Activated CD8-positive, alpha-beta memory T cell treated with anti-CD3 and anti-CD28 coated beads, Interleukin-2, amount 10 ng/mL, durations not matched to agents 7 days and 5 days (primary cell): ENCODE measurements at regions of chr17 and their contacts with region 1.

Region 1: DNA sequence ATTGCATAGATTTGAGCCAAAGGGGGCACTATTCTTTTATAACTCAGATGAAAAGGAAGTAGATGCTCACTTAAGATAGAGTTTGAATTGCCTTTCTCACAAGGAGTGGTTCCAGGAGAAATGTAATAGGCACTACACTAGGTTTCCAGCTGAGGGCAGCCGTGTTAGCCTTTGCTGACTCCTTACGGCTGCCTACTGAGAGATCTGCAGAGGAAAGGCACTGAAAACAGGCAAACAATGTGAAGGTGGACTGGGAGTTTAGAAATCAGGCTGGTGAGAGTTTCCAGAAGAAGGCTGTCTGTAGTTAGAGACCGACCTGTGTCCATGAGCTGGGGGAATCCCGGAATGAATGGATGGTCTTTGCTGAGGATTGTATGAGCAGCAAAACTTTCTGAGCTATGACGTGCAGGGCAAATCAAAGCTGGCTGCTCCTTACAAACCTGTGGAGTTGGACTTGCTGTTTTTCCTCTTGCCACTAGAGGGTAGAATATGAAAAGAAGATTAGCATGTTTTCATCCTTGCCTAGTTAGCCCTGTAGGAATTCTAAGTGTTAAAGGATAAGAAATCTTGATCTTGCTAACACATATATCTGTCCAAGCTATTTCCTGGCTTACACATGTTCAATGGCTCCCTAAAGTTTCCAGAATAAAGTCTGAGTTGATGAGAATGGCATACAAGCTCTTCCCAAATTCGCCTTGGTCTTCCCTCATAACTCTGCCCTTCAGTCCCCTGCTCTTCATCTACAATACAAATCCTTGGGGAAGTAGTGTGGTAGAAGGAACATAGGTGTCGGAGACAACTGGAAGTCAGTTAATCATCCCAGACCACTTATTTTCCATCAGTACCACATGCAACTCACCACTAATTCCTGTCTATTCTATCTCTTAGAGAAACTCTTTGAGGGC is 20.1 kb upstream of the TAOK1 start:
- DNase-seq: peak; percentile 65
- ATAC-seq: peak; percentile 93
- H3K4me3 Mint-ChIP-seq: no peak overlapping the region
- H3K27ac Mint-ChIP-seq: no peak overlapping the region
- H3K4me1 Mint-ChIP-seq: no peaks in the 10 kb centered on the region
- H3K27me3 Mint-ChIP-seq: no peaks in the 10 kb centered on the region

Region 2: GRCh38 chr17:29293890-29294579 is 76.0 kb before region 1 on chr17 and contains the start of gene NUFIP2:
- CTCF ChIA-PET with region 1: no interaction called
- DNase-seq: peak; percentile 99
- ATAC-seq: peak; percentile 89
- H3K4me3 Mint-ChIP-seq: peak within 1 kb of the TSS; percentile 98
- H3K27ac Mint-ChIP-seq: peak within 1 kb of the TSS; percentile 98
- H3K4me1 Mint-ChIP-seq: peaks cover 35% of the 10 kb centered on the region
- H3K27me3 Mint-ChIP-seq: no peaks in the 10 kb centered on the region
- total RNA-seq, gene NUFIP2: 66.3 to 78.0 TPM

Region 3: GRCh38 chr17:29386760-29387159 is 16.7 kb after region 1 on chr17:
- CTCF ChIA-PET with region 1: interaction called, 25 read pairs
- DNase-seq: no peak
- ATAC-seq: no peak
- H3K4me3 Mint-ChIP-seq: no peak overlapping the region
- H3K27ac Mint-ChIP-seq: no peak overlapping the region
- H3K4me1 Mint-ChIP-seq: peaks cover 17% of the 10 kb centered on the region
- H3K27me3 Mint-ChIP-seq: no peaks in the 10 kb centered on the region

Region 4: DNA sequence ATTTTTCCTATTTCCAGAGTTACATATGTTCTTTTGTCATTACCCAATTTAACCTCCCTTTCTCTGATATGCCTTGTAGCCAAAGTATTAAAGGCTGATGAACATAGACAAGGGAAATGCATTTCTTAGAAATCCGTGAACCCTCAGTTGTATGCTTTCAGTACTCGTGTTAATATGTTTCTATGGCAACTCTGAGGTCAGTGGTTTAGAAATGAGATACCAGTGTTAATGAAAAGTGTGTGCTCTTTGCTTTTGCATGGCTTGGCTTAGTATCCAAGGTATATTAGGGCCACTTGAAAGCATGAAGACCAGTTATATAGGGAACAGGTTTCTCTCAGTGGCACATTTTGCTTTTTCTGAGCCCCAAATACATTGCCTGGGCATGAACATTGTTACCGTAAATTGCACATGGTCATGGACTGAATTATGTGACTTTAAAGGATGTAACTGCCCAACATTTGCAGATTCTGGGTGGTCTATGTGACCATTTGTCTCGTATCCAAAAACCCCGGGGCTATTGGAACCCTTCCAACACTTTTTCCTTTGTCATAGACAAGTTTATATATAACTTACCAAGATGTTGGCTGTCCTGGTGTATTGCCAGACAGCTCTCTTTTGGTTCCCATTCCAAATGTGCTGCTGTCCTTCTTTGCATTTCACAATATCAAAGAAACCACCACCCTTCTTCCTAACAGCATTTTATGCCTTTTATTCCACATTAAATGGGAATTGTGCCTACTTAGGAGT is 179.3 kb after region 1 on chr17:
- CTCF ChIA-PET with region 1: interaction called, 10 read pairs
- DNase-seq: no peak
- ATAC-seq: peak; percentile 91
- H3K4me3 Mint-ChIP-seq: no peak overlapping the region
- H3K27ac Mint-ChIP-seq: peak overlapping the region; percentile 36
- H3K4me1 Mint-ChIP-seq: peaks cover 29% of the 10 kb centered on the region
- H3K27me3 Mint-ChIP-seq: no peaks in the 10 kb centered on the region

Region 5: GRCh38 chr17:29568331-29569244 is 198.5 kb after region 1 on chr17 and contains the start of gene TP53I13:
- CTCF ChIA-PET with region 1: interaction called, 38 read pairs
- DNase-seq: peak; percentile 92
- ATAC-seq: peak; percentile 61
- H3K4me3 Mint-ChIP-seq: peak within 1 kb of the TSS; percentile 95
- H3K27ac Mint-ChIP-seq: peak within 1 kb of the TSS; percentile 91
- H3K4me1 Mint-ChIP-seq: peaks cover 29% of the 10 kb centered on the region
- H3K27me3 Mint-ChIP-seq: no peaks in the 10 kb centered on the region
- total RNA-seq, gene TP53I13: 97.0 to 131 TPM